Endothelial cell of umbilical vein (primary cell): ENCODE measurements at regions of chr6 and their contacts with region 1.

Region 1: DNA sequence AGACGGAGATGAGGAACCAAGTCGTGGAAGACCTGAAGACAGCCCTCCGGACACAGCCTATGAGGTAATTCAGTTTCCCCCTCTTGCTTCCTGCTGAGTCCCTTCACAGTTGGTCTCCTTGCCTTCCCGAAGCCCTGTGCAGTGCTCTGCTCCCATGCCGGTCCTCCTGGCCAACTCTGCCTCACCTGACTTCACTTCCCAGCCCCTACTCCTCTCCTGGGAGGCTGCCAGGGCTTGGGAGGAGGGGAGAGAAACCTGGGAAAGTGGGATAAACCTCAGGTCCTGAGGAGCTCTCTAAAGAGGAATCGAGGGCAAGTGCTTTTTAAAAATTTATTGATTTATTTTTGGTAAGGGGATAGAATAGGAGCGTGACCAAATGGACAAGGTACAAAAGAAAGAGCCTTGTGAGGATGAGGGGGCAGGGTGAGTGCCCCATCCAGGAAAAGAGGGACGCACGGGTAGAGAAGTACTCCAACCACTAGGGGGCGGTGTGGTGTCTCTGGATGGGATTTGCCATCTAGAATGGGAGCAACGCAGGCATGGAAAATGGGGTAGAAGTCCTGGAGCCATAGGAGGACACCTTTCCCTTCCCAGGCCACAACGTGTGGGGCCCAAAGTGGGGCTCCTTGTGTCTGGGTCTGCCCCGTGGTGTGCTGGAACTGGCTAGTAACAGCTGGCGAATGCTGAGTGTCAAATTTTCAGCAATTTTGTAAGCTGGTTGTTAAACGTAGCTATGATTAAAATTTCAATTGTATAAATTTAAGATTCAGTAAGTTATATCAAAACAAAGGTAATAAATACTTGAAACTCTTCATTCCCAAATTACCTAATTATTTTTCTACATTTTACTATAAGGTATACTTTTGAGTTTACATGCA is 69.0 kb downstream of the MOCS1 start:
- DNase-seq: peak; percentile 71
- H3K4me3 ChIP-seq: no peak overlapping the region
- H3K27ac ChIP-seq: no peak overlapping the region
- H3K4me1 ChIP-seq: no peaks in the 10 kb centered on the region
- H3K27me3 ChIP-seq: peaks cover 0 to 2% of the 10 kb centered on the region in 2 experiments
- CTCF ChIP-seq: peak; percentile 80 to 81
- POLR2A ChIP-seq: no peak

Region 2: GRCh38 chr6:39347906-39348585 is 517.2 kb before region 1 on chr6:
- CTCF ChIA-PET with region 1: no interaction called
- POLR2A ChIA-PET with region 1: no interaction called
- dilution Hi-C with region 1: no loop called
- intact Hi-C with region 1: loop called (anchors 1 kb)
- DNase-seq: peak; percentile 56
- H3K4me3 ChIP-seq: no peak overlapping the region
- H3K27ac ChIP-seq: no peak overlapping the region
- H3K4me1 ChIP-seq: no peaks in the 10 kb centered on the region
- H3K27me3 ChIP-seq: no peaks in the 10 kb centered on the region
- CTCF ChIP-seq: peak; percentile 78 to 87
- POLR2A ChIP-seq: no peak

Region 3: DNA sequence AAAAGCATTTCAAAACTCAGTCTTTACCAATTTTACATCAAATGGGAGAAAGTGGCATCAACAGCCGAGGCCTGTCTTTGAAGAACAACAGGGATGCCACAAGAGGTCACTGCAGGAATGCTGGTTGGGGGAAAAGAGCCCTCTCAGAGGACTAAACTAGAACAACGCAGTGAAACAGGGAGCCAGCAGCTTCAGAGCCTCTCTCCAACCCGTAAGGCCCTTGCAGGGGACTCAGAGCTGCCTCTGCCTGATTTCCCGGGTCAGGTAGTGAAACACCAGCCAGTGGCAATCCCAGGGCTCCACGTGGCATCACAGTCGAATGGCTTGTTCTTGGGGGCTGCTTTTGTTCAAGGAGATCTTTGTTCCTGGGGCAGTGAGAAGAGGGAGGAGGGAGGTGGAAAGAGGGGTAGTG is 487.7 kb before region 1 on chr6:
- CTCF ChIA-PET with region 1: interaction called, 3 read pairs
- POLR2A ChIA-PET with region 1: no interaction called
- dilution Hi-C with region 1: no loop called
- intact Hi-C with region 1: loop called (anchors 1 kb)
- DNase-seq: peak; percentile 49
- H3K4me3 ChIP-seq: no peak overlapping the region
- H3K27ac ChIP-seq: no peak overlapping the region
- H3K4me1 ChIP-seq: no peaks in the 10 kb centered on the region
- H3K27me3 ChIP-seq: no peaks in the 10 kb centered on the region
- CTCF ChIP-seq: peak; percentile 47 to 68
- POLR2A ChIP-seq: no peak

Region 4: DNA sequence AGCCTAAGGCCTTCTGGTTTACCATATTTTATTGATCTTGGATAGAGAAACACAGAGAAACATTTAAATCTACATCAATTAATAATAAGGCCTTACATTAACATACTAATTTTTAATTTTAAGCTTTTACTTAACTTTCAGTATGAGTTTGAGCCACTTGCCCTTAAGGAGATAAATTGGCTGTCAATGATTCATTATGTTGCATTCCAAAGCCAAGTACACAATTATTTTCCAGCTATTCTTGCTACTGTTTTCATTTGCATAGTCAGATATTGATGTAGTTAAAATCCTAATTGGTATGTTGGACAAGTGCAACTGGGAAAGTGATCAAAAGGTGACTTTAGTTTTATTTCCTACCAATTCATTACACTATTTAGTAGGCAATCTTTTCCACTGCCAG is 10.9 kb after region 1 on chr6:
- CTCF ChIA-PET with region 1: interaction called, 47 read pairs
- POLR2A ChIA-PET with region 1: no interaction called
- dilution Hi-C with region 1: no loop called
- intact Hi-C with region 1: no loop called
- DNase-seq: no peak
- H3K4me3 ChIP-seq: no peak overlapping the region
- H3K27ac ChIP-seq: no peak overlapping the region
- H3K4me1 ChIP-seq: no peaks in the 10 kb centered on the region
- H3K27me3 ChIP-seq: peaks cover 0 to 7% of the 10 kb centered on the region in 2 experiments
- CTCF ChIP-seq: no peak
- POLR2A ChIP-seq: no peak

Region 5: DNA sequence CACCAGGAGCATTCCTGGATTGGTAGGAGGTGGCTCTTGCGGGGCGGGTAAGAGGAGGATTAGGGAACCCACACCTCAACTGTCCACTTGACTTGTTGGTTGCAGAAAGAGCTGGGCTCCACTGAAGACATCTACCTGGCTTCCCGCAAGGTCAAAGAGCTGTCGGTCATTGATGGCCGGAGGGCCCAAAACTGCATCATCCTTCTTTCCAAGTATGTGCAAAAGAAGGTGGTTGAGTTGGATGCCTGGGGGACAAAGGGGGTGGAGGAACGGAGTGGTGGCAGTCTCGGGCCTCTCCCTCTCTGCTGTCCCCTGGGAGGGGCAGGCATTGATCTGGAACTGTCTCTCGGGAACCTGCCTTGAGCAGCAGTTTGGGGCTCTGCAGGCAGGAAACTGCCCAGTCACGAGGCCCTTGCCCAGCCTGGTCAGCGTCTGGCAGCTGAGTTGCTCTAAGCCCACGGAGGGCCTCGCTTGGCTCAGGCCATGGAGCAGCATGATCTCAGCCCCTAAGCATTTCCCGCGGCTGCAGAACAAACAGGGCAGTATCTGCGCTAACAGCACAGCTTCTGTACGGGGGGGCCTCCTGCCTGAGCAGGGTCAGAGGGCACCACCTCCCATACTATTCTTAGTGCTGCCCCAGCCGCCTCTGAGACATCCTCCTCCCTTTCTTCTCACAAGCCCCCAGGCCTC is 22.3 kb after region 1 on chr6:
- CTCF ChIA-PET with region 1: interaction called, 313 read pairs
- POLR2A ChIA-PET with region 1: no interaction called
- dilution Hi-C with region 1: no loop called
- intact Hi-C with region 1: loop called (anchors 1 kb)
- DNase-seq: peak; percentile 96
- H3K4me3 ChIP-seq: no peak overlapping the region
- H3K27ac ChIP-seq: peak overlapping the region; percentile 86
- H3K4me1 ChIP-seq: peaks cover 28% of the 10 kb centered on the region
- H3K27me3 ChIP-seq: no peaks in the 10 kb centered on the region
- CTCF ChIP-seq: no peak
- POLR2A ChIP-seq: peak; percentile 38

Region 6: GRCh38 chr6:39899554-39900295 is 34.5 kb after region 1 on chr6:
- CTCF ChIA-PET with region 1: interaction called, 313 read pairs
- POLR2A ChIA-PET with region 1: no interaction called
- dilution Hi-C with region 1: no loop called
- intact Hi-C with region 1: no loop called
- DNase-seq: no peak
- H3K4me3 ChIP-seq: no peak overlapping the region
- H3K27ac ChIP-seq: no peak overlapping the region
- H3K4me1 ChIP-seq: no peaks in the 10 kb centered on the region
- H3K27me3 ChIP-seq: peaks cover 0 to 2% of the 10 kb centered on the region in 2 experiments
- CTCF ChIP-seq: no peak
- POLR2A ChIP-seq: no peak

Region 7: DNA sequence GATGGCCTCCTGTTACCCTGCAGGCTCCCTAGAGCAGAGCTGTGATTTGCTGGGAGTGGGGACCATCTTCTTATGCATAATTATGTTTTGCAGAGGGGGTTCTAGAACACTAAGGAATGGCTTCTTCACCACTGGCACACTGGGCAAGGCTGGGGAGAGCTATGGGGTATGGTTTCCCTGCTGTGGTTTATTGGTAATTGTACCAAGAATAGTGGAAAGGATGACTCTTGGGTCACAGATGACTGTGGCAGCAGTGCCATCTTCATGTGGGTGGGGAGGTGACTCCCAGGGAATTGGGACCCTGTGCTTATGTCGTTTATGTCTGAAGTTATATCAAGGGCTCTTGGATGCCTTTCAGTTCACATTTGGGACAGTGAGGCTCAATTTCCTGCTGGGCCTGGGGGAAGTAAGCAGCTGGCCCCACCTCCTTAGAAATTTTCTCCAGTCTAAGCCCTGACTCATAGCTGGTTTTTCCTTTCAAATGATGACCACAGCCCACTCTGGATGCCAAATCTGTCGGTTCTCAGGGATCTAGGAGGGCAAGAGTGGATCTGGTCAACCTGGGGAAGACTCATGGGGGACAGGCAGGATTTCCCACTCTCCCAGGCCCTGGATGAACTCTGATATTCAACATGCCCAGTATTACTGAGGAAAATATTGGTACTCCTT is 491.1 kb after region 1 on chr6:
- CTCF ChIA-PET with region 1: no interaction called
- POLR2A ChIA-PET with region 1: no interaction called
- dilution Hi-C with region 1: no loop called
- intact Hi-C with region 1: no loop called
- DNase-seq: no peak
- H3K4me3 ChIP-seq: no peak overlapping the region
- H3K27ac ChIP-seq: no peak overlapping the region
- H3K4me1 ChIP-seq: no peaks in the 10 kb centered on the region
- H3K27me3 ChIP-seq: no peaks in the 10 kb centered on the region
- CTCF ChIP-seq: no peak
- POLR2A ChIP-seq: no peak